A673 (cell line): ENCODE measurements at regions of chr4 and their contacts with region 1.

Region 1: GRCh38 chr4:30600246-30601017 is 119.7 kb upstream of the PCDH7 start:
- DNase-seq: peak; percentile 91
- H3K4me3 ChIP-seq: no peak overlapping the region
- H3K27ac ChIP-seq: peak overlapping the region; percentile 68
- H3K4me1 ChIP-seq: peaks cover 16% of the 10 kb centered on the region
- H3K27me3 ChIP-seq: no peaks in the 10 kb centered on the region
- CTCF ChIP-seq: no peak

Region 2: GRCh38 chr4:29295280-29295679 is 1305.2 kb before region 1 on chr4:
- CTCF ChIA-PET with region 1: no interaction called
- POLR2A ChIA-PET with region 1: no interaction called
- intact Hi-C with region 1: no loop called
- DNase-seq: no peak
- H3K4me3 ChIP-seq: no peak overlapping the region
- H3K27ac ChIP-seq: no peak overlapping the region
- H3K4me1 ChIP-seq: no peaks in the 10 kb centered on the region
- H3K27me3 ChIP-seq: no peaks in the 10 kb centered on the region
- CTCF ChIP-seq: no peak

Region 3: DNA sequence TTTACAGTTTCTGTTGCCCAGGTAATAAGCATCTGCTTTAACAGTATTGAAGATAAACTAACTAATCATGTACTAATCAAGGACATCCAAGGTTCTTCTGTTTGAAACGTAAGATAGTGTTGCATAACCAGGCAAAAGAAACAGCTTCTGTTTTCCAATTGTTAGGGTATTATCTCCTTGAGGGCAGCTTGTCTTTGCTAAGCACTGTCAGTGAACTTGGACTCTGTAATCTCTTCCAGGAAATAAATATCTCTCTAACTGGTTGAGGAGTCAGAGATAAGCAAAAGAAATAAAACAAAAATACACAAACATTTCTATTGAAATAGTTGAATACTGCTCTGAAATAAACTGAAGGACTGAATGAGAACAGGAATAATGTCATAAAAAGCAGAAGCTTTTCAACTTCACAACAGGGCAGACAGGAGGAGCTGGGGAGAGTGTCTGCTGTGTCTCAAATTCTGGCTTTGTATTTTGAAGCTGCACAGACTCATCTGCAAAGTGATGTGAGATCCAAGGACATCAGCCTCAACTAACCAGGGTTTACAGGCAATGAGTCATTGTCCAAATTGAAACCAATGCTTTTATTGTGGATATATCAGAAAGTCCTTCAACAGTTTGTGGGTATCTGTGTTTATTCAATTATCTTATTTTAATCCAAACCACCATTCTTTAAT is 1133.3 kb before region 1 on chr4:
- CTCF ChIA-PET with region 1: no interaction called
- POLR2A ChIA-PET with region 1: no interaction called
- intact Hi-C with region 1: no loop called
- DNase-seq: no peak
- H3K4me3 ChIP-seq: no peak overlapping the region
- H3K27ac ChIP-seq: no peak overlapping the region
- H3K4me1 ChIP-seq: no peaks in the 10 kb centered on the region
- H3K27me3 ChIP-seq: no peaks in the 10 kb centered on the region
- CTCF ChIP-seq: no peak

Region 4: GRCh38 chr4:29805245-29805644 is 795.2 kb before region 1 on chr4:
- CTCF ChIA-PET with region 1: no interaction called
- POLR2A ChIA-PET with region 1: no interaction called
- intact Hi-C with region 1: loop called (anchors 1 kb)
- DNase-seq: peak; percentile 87
- H3K4me3 ChIP-seq: no peak overlapping the region
- H3K27ac ChIP-seq: peak overlapping the region; percentile 77
- H3K4me1 ChIP-seq: peaks cover 19% of the 10 kb centered on the region
- H3K27me3 ChIP-seq: no peaks in the 10 kb centered on the region
- CTCF ChIP-seq: peak; percentile 69

Region 5: GRCh38 chr4:30380404-30380998 is 219.9 kb before region 1 on chr4:
- CTCF ChIA-PET with region 1: no interaction called
- POLR2A ChIA-PET with region 1: no interaction called
- intact Hi-C with region 1: loop called (anchors 5 kb)
- DNase-seq: peak; percentile 77
- H3K4me3 ChIP-seq: no peak overlapping the region
- H3K27ac ChIP-seq: no peak overlapping the region
- H3K4me1 ChIP-seq: no peaks in the 10 kb centered on the region
- H3K27me3 ChIP-seq: no peaks in the 10 kb centered on the region
- CTCF ChIP-seq: peak; percentile 71

Region 6: DNA sequence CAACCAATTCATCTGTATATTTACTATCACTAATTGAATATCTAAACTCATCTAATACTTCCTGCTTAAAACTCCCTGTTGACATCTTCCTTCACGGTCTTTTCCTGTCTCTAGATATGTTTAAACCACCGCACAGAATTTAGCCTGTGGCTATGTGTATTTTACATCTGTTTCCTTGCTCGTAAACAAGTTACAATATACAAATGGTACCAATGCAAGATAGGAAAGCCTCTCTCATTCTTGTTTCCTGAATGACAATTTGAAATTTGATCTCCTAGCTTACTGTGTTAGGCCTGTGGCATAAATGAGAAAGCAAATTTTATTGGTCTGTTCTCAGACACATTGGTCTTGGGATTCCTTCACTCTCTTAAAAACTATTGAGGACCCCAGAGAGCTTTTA is 30.0 kb after region 1 on chr4:
- CTCF ChIA-PET with region 1: no interaction called
- POLR2A ChIA-PET with region 1: no interaction called
- intact Hi-C with region 1: loop called (anchors 1 kb)
- DNase-seq: peak; percentile 91
- H3K4me3 ChIP-seq: no peak overlapping the region
- H3K27ac ChIP-seq: peak overlapping the region; percentile 84
- H3K4me1 ChIP-seq: no peaks in the 10 kb centered on the region
- H3K27me3 ChIP-seq: no peaks in the 10 kb centered on the region
- CTCF ChIP-seq: no peak